ENCODE measurements at regions of chr7 and their contacts with region 1.

Region 1: GRCh38 chr7:123494193-123494796 is 40.1 kb downstream of the IQUB start:
- DNase-seq: peak; percentile 21
- ATAC-seq: peak; percentile 60
- H3K4me3 ChIP-seq: no peak overlapping the region
- H3K27ac ChIP-seq: no peak overlapping the region
- H3K4me1 ChIP-seq: no peaks in the 10 kb centered on the region
- H3K27me3 ChIP-seq: no peaks in the 10 kb centered on the region
- CTCF ChIP-seq: peak; percentile 50 to 78 (median 76)
- POLR2A ChIP-seq: no peak
- RAD21 ChIP-seq: peak; percentile 82

Region 2: DNA sequence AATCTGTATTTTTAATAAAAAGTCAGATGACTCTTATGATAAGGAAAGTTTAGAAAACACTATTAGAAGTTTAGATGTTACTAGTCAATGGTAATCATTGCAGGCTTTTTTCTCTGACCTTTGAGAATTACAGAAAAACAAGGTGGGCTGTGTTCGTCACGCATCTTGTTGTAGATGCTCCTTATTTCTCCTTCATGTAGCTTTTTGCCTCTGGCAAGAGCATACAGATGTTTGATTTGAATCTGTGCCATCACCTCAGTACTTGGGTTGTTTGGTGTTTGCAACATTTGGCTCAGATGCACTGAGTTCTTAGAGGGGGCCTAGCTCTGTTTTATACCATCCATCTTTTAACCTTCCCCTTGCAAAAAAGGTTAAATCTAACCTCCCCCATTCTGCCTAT is 510.3 kb before region 1 on chr7:
- CTCF ChIA-PET with region 1: no interaction called
- POLR2A ChIA-PET with region 1: no interaction called
- RAD21 ChIA-PET with region 1: no interaction called
- intact Hi-C with region 1: no loop called
- DNase-seq: no peak
- ATAC-seq: no peak
- H3K4me3 ChIP-seq: no peak overlapping the region
- H3K27ac ChIP-seq: no peak overlapping the region
- H3K4me1 ChIP-seq: no peaks in the 10 kb centered on the region
- H3K27me3 ChIP-seq: no peaks in the 10 kb centered on the region
- CTCF ChIP-seq: no peak
- POLR2A ChIP-seq: no peak
- RAD21 ChIP-seq: no peak

Region 3: DNA sequence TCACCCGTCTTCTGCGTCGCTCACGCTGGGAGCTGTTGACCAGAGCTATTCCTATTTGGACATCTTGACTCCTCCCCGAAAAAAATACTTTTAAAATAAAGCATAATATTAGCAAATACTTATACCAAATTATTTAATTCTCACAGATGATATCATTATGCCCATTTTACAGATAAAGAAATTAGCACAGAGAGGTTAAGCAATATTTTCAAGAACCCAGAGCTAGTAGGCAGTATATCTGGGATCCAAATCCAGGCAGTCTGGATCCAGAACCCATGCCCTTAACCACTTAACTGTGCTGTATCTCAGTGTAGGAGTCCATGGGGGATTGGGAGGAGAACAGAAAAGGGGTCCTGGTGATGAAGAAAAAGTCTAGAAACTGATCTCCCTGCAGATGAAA is 34.0 kb after region 1 on chr7:
- CTCF ChIA-PET with region 1: interaction called, 19 read pairs
- POLR2A ChIA-PET with region 1: no interaction called
- RAD21 ChIA-PET with region 1: no interaction called
- intact Hi-C with region 1: no loop called
- DNase-seq: no peak
- ATAC-seq: peak; percentile 73
- H3K4me3 ChIP-seq: peak overlapping the region; percentile 40 to 52
- H3K27ac ChIP-seq: no peak overlapping the region
- H3K4me1 ChIP-seq: peaks cover 3 to 5% of the 10 kb centered on the region in 2 experiments; a peak in 3 of 4 replicates
- H3K27me3 ChIP-seq: no peaks in the 10 kb centered on the region
- CTCF ChIP-seq: no peak
- POLR2A ChIP-seq: no peak
- RAD21 ChIP-seq: no peak

Region 4: DNA sequence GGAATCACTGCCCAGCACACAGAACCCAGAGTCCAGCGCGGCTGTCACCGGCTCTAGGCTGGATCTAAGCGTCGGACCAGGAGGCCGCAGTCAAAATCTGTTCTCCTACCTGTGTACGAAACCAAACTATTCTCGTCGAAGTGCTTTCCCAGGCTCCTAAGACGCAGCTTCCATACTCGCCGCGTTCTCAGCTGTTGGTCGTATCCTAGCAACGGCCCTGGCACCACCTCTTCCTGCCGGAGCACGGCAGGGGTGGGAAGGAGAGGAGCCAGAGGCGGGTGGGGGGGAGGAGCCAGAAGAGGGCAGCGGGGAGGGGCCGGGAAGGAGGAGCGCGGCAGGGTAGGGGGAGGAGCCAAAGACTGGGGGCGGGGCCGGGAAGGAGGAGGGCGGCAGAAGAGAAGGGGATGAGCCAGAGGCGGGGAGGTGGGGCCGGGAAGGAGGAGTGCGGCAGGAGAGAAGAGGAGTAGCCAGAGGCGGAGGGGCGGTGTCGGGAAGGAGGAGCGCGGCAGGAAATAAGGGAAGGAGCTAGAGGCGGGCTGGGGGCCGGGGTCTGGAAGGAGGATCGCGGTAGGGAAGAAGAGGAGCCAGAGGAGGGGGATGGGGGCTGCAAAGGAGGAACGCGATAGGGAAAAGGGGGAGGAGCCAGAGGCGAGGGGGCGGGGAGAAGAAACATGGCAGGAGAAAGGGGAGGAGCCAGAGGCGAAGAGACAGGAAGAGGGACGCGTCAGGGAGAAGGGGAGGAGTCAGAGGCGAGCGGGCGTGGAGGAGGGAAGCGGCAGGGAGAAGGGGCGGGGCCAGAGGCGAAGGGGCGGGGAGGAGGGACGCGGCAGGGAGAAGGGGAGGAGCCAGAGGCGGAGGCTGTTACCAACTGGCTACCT is 40.3 kb after region 1 on chr7 and contains the start of gene IQUB:
- CTCF ChIA-PET with region 1: interaction called, 19 read pairs
- POLR2A ChIA-PET with region 1: no interaction called
- RAD21 ChIA-PET with region 1: interaction called in 1 of 2 experiments, 4 read pairs
- intact Hi-C with region 1: loop called (anchors 1 kb)
- DNase-seq: peak; percentile 93
- ATAC-seq: peak; percentile 86
- H3K4me3 ChIP-seq: peak within 1 kb of the TSS; percentile 60 to 61
- H3K27ac ChIP-seq: peak within 1 kb of the TSS; percentile 49; the same call in 1 of the 2 replicates
- H3K4me1 ChIP-seq: peaks cover 11 to 33% of the 10 kb centered on the region in 2 experiments
- H3K27me3 ChIP-seq: no peaks in the 10 kb centered on the region
- CTCF ChIP-seq: no peak
- POLR2A ChIP-seq: no peak
- RAD21 ChIP-seq: no peak
- total RNA-seq, gene IQUB: 0.79 TPM

Region 5: DNA sequence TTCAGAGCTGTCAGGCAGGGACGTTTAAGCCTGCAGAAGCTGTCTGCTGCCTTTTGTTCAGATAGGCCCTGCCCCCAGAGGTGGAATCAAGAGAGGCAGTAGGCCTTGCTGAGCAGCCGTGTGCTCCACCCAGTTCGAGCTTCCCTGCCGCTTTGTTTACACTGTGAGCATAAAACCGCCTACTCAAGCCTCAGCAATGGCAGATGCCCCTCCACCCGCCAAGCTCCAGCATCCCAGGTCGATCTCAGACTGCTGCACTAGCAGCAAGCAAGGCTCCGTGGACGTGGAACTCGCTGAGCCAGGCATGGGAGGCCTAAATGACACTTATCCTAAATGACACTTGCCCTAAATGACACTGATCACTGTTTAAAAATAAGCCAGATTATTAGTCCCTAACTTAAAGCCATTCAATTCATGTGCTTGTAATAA is 100.5 kb after region 1 on chr7:
- CTCF ChIA-PET with region 1: no interaction called
- POLR2A ChIA-PET with region 1: no interaction called
- RAD21 ChIA-PET with region 1: no interaction called
- intact Hi-C with region 1: no loop called
- DNase-seq: no peak
- ATAC-seq: no peak
- H3K4me3 ChIP-seq: no peak overlapping the region
- H3K27ac ChIP-seq: no peak overlapping the region
- H3K4me1 ChIP-seq: no peaks in the 10 kb centered on the region
- H3K27me3 ChIP-seq: no peaks in the 10 kb centered on the region
- CTCF ChIP-seq: no peak
- POLR2A ChIP-seq: no peak
- RAD21 ChIP-seq: no peak

Region 6: GRCh38 chr7:123635551-123636359 is 141.5 kb after region 1 on chr7:
- CTCF ChIA-PET with region 1: interaction called, 9 read pairs
- POLR2A ChIA-PET with region 1: no interaction called
- RAD21 ChIA-PET with region 1: no interaction called
- intact Hi-C with region 1: loop called (anchors 10 kb)
- DNase-seq: no peak
- ATAC-seq: peak; percentile 75; the same call in 1 of the 2 replicates
- H3K4me3 ChIP-seq: no peak overlapping the region
- H3K27ac ChIP-seq: no peak overlapping the region
- H3K4me1 ChIP-seq: peaks cover 0 to 8% of the 10 kb centered on the region in 2 experiments; a peak in 1 of 4 replicates
- H3K27me3 ChIP-seq: no peaks in the 10 kb centered on the region
- CTCF ChIP-seq: peak; percentile 49 to 74 (median 65)
- POLR2A ChIP-seq: no peak
- RAD21 ChIP-seq: peak; percentile 86

Region 7: GRCh38 chr7:123682690-123683089 is 188.4 kb after region 1 on chr7:
- CTCF ChIA-PET with region 1: no interaction called
- POLR2A ChIA-PET with region 1: no interaction called
- RAD21 ChIA-PET with region 1: no interaction called
- intact Hi-C with region 1: loop called (anchors 5 kb)
- DNase-seq: peak; percentile 23
- ATAC-seq: peak; percentile 65; the same call in 1 of the 2 replicates
- H3K4me3 ChIP-seq: no peak overlapping the region
- H3K27ac ChIP-seq: no peak overlapping the region
- H3K4me1 ChIP-seq: no peaks in the 10 kb centered on the region
- H3K27me3 ChIP-seq: no peaks in the 10 kb centered on the region
- CTCF ChIP-seq: peak; percentile 44 to 62 (median 45); a peak in 5 of 6 replicates
- POLR2A ChIP-seq: no peak
- RAD21 ChIP-seq: peak; percentile 69

Region 8: GRCh38 chr7:123871998-123872867 is 377.9 kb after region 1 on chr7:
- CTCF ChIA-PET with region 1: interaction called, 31 read pairs
- POLR2A ChIA-PET with region 1: no interaction called
- RAD21 ChIA-PET with region 1: interaction called, 6 to 8 read pairs
- intact Hi-C with region 1: loop called (anchors 2 kb)
- DNase-seq: peak; percentile 51
- ATAC-seq: peak; percentile 99
- H3K4me3 ChIP-seq: no peak overlapping the region
- H3K27ac ChIP-seq: no peak overlapping the region
- H3K4me1 ChIP-seq: no peaks in the 10 kb centered on the region
- H3K27me3 ChIP-seq: no peaks in the 10 kb centered on the region
- CTCF ChIP-seq: peak; percentile 54 to 67 (median 58); a peak in 5 of 6 replicates
- POLR2A ChIP-seq: no peak
- RAD21 ChIP-seq: peak; percentile 85